H1 (cell line): ENCODE measurements at regions of chr5 and their contacts with region 1.

Region 1: DNA sequence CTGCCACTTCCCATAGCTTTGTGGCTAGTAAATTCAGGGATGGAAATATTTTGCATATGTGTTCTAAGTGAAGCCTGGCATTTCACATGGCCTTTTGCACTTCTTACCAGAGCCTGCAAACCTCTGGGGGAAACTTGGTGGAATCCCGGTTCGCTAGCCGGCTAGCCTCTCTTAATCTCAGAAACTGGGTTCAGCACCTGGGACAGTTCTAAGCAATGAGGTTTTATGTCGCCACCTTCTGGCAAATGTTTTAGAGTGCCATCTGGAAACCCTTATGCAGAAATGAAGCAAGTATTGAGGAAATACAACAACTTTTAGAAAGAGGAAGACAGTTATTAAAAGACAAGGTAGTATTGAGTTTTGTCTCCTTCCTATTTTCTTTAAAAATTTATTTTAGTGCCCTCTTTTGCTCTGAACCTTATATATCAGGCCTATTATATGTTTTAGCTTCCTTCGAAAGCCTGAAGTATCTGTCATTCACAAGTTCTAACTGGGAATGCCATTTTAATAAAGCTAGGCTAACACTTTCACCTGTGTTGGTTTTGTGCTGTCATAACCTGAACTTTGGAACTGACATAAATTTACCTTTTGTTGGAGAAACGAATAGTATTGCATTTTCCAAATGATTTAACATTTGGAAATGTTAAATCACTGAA is 963 bp upstream of the HTR1A start:
- DNase-seq: peak in 1 of 2 experiments; percentile 75
- H3K4me3 ChIP-seq: peak overlapping the region; percentile 50 to 64 (median 58); a peak in 6 of 8 replicates
- H3K27ac ChIP-seq: no peak overlapping the region
- H3K4me1 ChIP-seq: peaks cover 0 to 10% (median 3%) of the 10 kb centered on the region in 4 experiments; a peak in 5 of 7 replicates
- H3K27me3 ChIP-seq: peaks cover 5 to 33% (median 23%) of the 10 kb centered on the region in 4 experiments
- CTCF ChIP-seq: peak; percentile 12 to 83 (median 75)
- EP300 ChIP-seq: no peak
- POLR2A ChIP-seq: no peak
- RAD21 ChIP-seq: peak; percentile 62 to 73

Region 2: DNA sequence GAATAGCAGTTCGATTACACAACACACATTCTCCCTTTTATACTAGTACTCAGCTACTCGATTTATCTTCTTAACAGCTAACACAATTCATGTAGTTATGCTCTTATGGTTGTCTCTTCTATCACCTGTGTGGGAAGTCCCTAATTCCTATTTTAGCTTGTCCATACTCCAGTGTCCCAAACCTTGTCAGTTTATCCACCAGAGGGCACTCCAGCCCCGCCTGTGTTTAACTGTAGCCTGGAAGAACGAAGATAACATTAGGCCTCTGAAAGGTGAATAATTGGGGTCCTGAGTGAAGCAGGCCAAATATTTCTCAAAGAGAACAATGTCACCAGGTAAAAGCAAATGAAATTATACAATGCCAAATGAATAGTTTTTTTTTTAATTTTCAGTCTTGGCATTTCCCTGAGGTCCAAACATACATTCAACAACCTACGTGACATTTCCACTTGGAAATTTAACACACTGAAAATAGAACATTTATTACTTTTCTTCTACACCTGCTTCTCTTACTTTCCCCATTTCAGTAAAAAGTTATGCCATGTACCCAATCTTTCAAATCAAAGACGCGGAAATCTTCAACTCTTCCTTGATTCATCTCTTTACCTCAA is 561.7 kb before region 1 on chr5:
- CTCF ChIA-PET with region 1: interaction called, 47 read pairs
- POLR2A ChIA-PET with region 1: no interaction called
- DNase-seq: peak in 1 of 2 experiments; percentile 82
- H3K4me3 ChIP-seq: no peak overlapping the region
- H3K27ac ChIP-seq: no peak overlapping the region
- H3K4me1 ChIP-seq: no peaks in the 10 kb centered on the region
- H3K27me3 ChIP-seq: no peaks in the 10 kb centered on the region
- CTCF ChIP-seq: peak; percentile 47 to 86 (median 79)
- EP300 ChIP-seq: no peak
- POLR2A ChIP-seq: no peak
- RAD21 ChIP-seq: peak; percentile 97 to 99

Region 3: GRCh38 chr5:64026493-64026892 is 63.3 kb after region 1 on chr5:
- CTCF ChIA-PET with region 1: no interaction called
- POLR2A ChIA-PET with region 1: no interaction called
- DNase-seq: no peak
- H3K4me3 ChIP-seq: no peak overlapping the region
- H3K27ac ChIP-seq: no peak overlapping the region
- H3K4me1 ChIP-seq: no peaks in the 10 kb centered on the region
- H3K27me3 ChIP-seq: no peaks in the 10 kb centered on the region
- CTCF ChIP-seq: no peak
- EP300 ChIP-seq: no peak
- POLR2A ChIP-seq: no peak
- RAD21 ChIP-seq: no peak